BJ (cell line): ENCODE measurements at regions of chr16 and their contacts with region 1.

Region 1: GRCh38 chr16:85728879-85729278 is 22.0 kb downstream of the C16orf74 start:
- DNase-seq: no peak
- H3K4me3 ChIP-seq: no peak overlapping the region
- H3K27me3 ChIP-seq: no peaks in the 10 kb centered on the region
- CTCF ChIP-seq: peak; percentile 31; the same call in 1 of the 2 replicates

Region 2: DNA sequence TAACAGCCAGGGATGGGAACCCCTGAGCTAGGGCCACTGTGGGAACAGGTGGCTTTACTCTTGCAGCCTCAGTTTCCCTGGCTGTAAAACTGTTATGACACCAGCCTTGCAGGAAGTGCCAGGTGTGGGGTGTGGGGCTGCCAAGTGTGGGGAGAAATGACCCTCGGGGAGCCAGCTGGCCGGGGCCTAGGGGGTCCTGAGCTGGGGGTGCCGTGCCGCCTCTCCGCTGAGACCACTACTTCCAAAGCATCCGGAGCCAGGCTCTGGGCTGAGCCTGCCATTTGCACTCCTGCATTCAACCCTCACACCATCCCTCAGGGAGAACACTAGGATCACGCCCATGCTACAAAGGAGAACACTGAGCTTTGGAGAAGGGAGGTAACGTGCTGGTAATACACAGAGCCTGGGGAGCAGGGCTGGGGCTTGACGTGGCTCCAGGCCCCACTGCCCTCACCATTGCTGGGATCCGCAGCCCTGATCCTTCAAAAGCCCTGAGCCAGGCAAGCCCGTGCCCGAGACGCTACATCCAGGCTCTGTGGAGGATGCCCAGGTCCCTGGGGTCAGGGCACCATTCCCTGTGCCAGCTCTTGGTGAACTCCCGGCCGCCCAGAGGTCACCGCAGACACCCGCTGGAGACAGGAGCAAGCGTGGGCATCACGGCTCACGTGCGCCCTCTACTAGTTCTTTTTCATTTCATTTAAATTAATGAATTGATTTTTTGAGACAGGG is 11.3 kb before region 1 on chr16:
- CTCF ChIA-PET with region 1: interaction called, 21 read pairs
- POLR2A ChIA-PET with region 1: no interaction called
- DNase-seq: no peak
- H3K4me3 ChIP-seq: no peak overlapping the region
- H3K27me3 ChIP-seq: no peaks in the 10 kb centered on the region
- CTCF ChIP-seq: peak; percentile 66

Region 3: GRCh38 chr16:85844786-85845185 is 115.9 kb after region 1 on chr16:
- CTCF ChIA-PET with region 1: no interaction called
- POLR2A ChIA-PET with region 1: no interaction called
- DNase-seq: no peak
- H3K4me3 ChIP-seq: no peak overlapping the region
- H3K27me3 ChIP-seq: peaks cover 9% of the 10 kb centered on the region
- CTCF ChIP-seq: no peak